GM10248 (cell line): ENCODE measurements at regions of chr9 and their contacts with region 1.

Region 1: GRCh38 chr9:99266255-99267023 is 44.4 kb downstream of the SEC61B start:
- DNase-seq: peak; percentile 64
- CTCF ChIP-seq: peak; percentile 92

Region 2: GRCh38 chr9:99075246-99075912 is 191.1 kb before region 1 on chr9:
- CTCF ChIA-PET with region 1: no interaction called
- POLR2A ChIA-PET with region 1: no interaction called
- DNase-seq: no peak
- CTCF ChIP-seq: no peak

Region 3: DNA sequence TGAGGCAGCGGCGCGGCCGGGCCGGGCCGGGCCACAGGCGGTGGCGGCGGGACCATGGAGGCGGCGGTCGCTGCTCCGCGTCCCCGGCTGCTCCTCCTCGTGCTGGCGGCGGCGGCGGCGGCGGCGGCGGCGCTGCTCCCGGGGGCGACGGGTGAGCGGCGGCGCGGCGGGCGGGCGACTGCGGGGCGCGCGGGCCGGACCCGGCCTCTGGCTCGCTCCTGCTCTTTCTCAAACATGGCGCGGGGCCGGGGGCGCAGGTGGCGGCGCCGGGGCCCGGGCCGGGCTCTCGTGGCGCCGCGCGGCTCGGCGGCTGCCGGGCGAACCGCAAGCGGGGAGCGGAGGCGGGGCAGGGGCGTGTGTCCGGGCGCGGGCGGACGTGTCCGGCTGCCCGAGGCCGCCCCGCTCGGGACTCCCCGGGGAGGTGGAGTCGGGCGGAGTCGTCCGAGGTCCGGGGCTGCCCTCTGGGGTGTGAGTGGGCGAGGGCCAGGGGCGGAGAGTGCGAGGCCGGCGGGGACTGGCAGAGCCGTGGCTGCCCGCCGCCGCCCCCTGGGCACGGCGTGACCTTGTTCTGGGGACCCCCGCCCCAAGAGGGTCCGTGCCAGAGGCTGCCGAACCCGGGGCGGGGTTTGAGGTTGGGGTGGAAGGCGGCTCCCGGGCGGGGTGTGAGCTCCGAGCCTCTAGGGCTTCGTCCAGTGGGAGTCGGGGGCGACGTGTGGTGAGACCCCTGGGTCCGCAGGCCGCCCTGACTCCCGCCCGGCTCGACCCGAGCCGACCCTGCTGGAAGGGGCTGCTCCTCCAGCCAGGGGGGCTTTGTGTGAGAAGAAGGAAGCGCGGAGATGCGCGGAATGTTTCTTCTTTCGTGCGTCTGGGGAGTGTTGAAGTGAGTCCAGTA is 161.0 kb before region 1 on chr9:
- CTCF ChIA-PET with region 1: no interaction called
- POLR2A ChIA-PET with region 1: no interaction called
- DNase-seq: peak; percentile 90
- CTCF ChIP-seq: no peak

Region 4: GRCh38 chr9:99253772-99254431 is 12.5 kb before region 1 on chr9:
- CTCF ChIA-PET with region 1: interaction called, 15 read pairs
- POLR2A ChIA-PET with region 1: no interaction called
- DNase-seq: peak; percentile 85
- CTCF ChIP-seq: no peak